ENCODE measurements at regions of chr19 and their contacts with region 1.

Region 1: GRCh38 chr19:47112997-47113849 is at the start of gene ZC3H4:
- DNase-seq: peak; percentile 99
- H3K4me3 ChIP-seq: peak within 1 kb of the TSS; percentile 69
- H3K27ac ChIP-seq: peak within 1 kb of the TSS; percentile 99 to 100
- H3K4me1 ChIP-seq: no peaks in the 10 kb centered on the region
- H3K27me3 ChIP-seq: no peaks in the 10 kb centered on the region
- CTCF ChIP-seq: peak in 1 of 3 donors; percentile 29
- EP300 ChIP-seq: peak; percentile 50
- POLR2A ChIP-seq: peak; percentile 94
- total RNA-seq, gene ZC3H4: 10.7 to 58.2 (median 50.0) TPM

Region 2: GRCh38 chr19:46850228-46851203 is 262.7 kb before region 1 on chr19 and contains the start of gene AP2S1:
- intact Hi-C with region 1: loop called in 2 of 4 experiments (anchors 10 kb)
- DNase-seq: peak; percentile 94 to 98 (median 95)
- H3K4me3 ChIP-seq: peak within 1 kb of the TSS; percentile 96
- H3K27ac ChIP-seq: peak within 1 kb of the TSS in 1 of 2 donors; percentile 63
- H3K4me1 ChIP-seq: peaks cover 7% of the 10 kb centered on the region
- H3K27me3 ChIP-seq: no peaks in the 10 kb centered on the region
- CTCF ChIP-seq: peak in 1 of 3 donors; percentile 1
- EP300 ChIP-seq: no peak
- POLR2A ChIP-seq: peak; percentile 62
- total RNA-seq, gene AP2S1: 39.9 to 86.3 (median 57.0) TPM

Region 3: GRCh38 chr19:46904114-46905060 is 208.8 kb before region 1 on chr19:
- intact Hi-C with region 1: no loop called
- DNase-seq: peak; percentile 40 to 63 (median 43)
- H3K4me3 ChIP-seq: no peak overlapping the region
- H3K27ac ChIP-seq: peak overlapping the region in 1 of 2 donors; percentile 50
- H3K4me1 ChIP-seq: peaks cover 12% of the 10 kb centered on the region
- H3K27me3 ChIP-seq: no peaks in the 10 kb centered on the region
- CTCF ChIP-seq: no peak
- EP300 ChIP-seq: no peak
- POLR2A ChIP-seq: no peak

Region 4: GRCh38 chr19:47035127-47036096 is 77.8 kb before region 1 on chr19:
- intact Hi-C with region 1: loop called in 1 of 4 experiments (anchors 5 kb)
- DNase-seq: peak; percentile 77 to 94 (median 87)
- H3K4me3 ChIP-seq: peak overlapping the region; percentile 29
- H3K27ac ChIP-seq: no peak overlapping the region
- H3K4me1 ChIP-seq: peaks cover 2% of the 10 kb centered on the region
- H3K27me3 ChIP-seq: no peaks in the 10 kb centered on the region
- CTCF ChIP-seq: peak; percentile 74 to 94 (median 88)
- EP300 ChIP-seq: no peak
- POLR2A ChIP-seq: no peak

Region 5: DNA sequence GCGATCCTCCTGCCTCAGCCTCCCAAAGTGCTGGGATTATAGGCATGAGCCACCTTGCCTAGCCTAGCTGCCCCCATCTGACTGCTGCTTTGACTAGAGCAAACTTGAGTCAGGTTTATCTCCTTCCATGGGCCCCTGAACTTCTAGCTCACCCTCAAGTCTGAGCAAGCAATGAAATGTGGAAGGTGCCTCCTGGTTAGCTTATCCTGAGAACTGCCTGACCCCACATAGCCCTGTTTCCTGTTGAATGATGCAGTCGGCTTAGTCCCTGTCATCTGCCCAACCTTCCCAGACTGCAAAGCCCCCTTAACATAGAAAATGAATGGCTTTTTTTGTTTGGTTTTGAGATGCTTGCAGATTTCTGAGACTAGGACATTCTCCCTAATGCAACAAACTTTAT is 55.9 kb before region 1 on chr19:
- intact Hi-C with region 1: no loop called
- DNase-seq: no peak
- H3K4me3 ChIP-seq: no peak overlapping the region
- H3K27ac ChIP-seq: no peak overlapping the region
- H3K4me1 ChIP-seq: no peaks in the 10 kb centered on the region
- H3K27me3 ChIP-seq: no peaks in the 10 kb centered on the region
- CTCF ChIP-seq: no peak
- EP300 ChIP-seq: no peak
- POLR2A ChIP-seq: no peak

Region 6: DNA sequence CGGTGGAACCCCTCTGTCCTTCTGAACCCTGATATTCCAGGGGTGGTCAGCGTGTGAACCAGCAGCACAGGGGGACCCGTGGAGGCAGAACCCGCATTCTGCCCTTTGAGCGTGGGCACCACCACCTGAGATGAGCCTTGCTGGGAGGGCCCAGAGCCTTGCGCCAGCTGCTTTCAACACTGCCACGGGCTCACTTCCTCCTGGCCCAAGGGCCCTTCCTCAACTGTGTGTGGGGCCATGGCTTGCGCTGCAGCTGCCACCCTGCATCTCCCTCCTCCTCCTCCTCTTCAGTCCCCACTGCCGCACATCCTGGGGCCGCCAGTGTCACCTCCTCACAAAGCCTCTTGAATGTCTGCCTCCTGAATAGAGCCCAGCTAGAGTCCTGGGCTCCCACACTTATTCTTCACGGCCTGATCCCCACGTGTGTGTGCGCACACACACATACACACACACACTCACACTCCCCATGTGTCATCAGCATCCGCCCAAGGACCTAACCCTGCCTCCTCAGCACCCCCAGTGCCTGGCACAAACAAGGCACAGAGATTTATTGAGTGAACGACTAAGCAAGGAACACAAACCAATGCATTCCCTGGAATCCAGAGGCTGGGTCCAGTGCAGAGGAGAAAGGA is 37.9 kb before region 1 on chr19:
- intact Hi-C with region 1: loop called in 1 of 4 experiments (anchors 5 kb)
- DNase-seq: no peak
- H3K4me3 ChIP-seq: no peak overlapping the region
- H3K27ac ChIP-seq: no peak overlapping the region
- H3K4me1 ChIP-seq: no peaks in the 10 kb centered on the region
- H3K27me3 ChIP-seq: no peaks in the 10 kb centered on the region
- CTCF ChIP-seq: no peak
- EP300 ChIP-seq: no peak
- POLR2A ChIP-seq: no peak

Region 7: DNA sequence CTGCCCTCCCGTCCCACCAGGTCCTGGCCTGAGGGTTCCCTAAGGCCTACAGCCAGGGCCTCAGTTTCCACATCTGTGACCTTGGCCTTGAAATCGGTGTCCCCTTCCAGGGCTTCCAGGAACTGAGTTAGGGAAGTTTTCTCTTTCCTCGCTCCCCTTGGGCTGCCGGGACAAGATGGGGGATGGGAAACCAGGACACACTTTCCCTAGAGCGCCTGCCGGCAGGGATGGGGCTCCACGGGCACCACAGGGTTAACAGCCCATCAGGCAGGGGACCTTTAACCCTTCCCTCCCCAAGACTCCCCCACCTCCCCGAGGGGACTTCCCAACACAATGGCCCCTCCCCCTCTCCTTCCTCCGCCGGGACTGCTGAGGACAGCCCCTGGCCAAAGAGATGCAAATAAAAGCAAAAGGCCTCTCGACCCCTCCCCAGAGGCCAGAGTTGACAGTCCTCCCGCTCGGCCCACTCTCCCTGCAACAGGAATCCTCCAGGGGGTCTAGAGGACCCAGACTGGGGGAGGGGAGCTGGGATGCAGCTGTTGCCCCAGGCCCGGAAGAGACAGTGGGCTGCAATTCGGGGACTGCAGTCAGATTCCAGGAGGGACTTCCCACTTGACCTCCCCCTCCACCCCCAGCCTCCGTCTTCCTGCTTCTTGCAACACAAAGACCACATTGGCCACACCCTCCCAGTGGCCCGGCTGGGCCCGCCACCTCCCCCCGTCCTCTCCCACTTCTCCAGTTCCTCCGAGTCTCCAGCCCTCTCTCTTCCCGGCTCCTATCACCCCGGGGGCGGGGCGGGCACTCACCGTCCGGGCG is 114.3 kb after region 1 on chr19:
- intact Hi-C with region 1: loop called in 1 of 4 experiments (anchors 2 kb)
- DNase-seq: peak; percentile 82 to 91 (median 87)
- H3K4me3 ChIP-seq: peak overlapping the region; percentile 64
- H3K27ac ChIP-seq: peak overlapping the region; percentile 95 to 96
- H3K4me1 ChIP-seq: peaks cover 12% of the 10 kb centered on the region
- H3K27me3 ChIP-seq: no peaks in the 10 kb centered on the region
- CTCF ChIP-seq: no peak
- EP300 ChIP-seq: peak; percentile 11
- POLR2A ChIP-seq: peak; percentile 53

Region 8: DNA sequence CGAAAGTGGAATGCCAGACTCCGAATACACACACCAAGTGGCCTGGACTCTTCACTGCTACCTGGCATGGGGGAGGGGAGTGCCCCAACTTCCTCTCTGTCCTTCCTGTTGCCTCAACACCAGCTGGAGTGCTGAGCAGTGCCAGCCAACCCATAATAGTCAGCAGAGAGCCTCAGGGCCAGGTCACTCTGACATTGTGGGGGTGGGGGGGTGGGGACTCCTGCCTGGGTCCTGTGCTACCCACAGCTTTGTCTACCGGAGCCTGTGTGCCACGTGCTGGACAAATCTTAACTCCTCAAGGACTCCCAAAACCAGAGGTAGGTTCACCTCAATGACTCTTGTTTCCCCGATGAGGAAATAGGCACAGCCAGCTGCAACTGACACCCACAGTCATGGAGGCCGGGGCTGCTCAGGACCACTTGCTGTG is 223.6 kb after region 1 on chr19:
- intact Hi-C with region 1: no loop called
- DNase-seq: peak in 4 of 5 donors; percentile 21 to 62 (median 43)
- H3K4me3 ChIP-seq: no peak overlapping the region
- H3K27ac ChIP-seq: no peak overlapping the region
- H3K4me1 ChIP-seq: peaks cover 3% of the 10 kb centered on the region
- H3K27me3 ChIP-seq: no peaks in the 10 kb centered on the region
- CTCF ChIP-seq: no peak
- EP300 ChIP-seq: no peak
- POLR2A ChIP-seq: no peak